IMR-90 (cell line): ENCODE measurements at regions of chr16 and their contacts with region 1.

Region 1: DNA sequence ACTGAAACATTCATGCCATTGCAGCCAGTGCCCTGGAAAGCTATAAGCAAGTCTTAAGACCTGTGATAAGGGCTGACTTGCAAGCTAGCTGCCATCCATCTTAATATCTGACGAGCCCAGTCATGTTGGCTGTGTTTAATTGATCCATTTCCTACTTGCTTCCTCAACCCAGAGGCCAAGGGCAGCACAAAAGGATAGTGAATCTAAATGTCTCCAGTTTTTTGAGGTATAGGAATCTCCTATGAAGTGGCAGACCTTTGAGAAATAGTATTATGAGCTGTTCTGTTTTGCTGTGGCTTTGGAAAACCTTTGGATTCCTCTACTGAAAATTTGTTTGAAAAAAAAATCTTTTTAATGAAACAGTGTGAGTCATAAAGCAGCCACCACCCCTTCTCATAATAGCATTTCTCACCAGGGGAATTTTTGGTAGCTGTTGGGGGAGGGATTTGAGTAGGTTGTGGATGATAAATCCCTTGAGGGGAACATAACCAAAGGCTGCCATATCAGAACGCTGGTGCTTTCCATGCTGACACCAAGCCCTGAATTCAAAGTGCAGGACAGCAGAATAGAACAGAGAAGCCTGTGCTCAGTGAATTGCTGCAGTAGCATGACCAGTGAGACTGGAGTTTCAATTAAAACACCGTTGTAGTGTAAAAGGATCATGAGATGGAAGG is 12.9 kb downstream of the ZNRF1 start:
- DNase-seq: peak; percentile 92
- ATAC-seq: peak; percentile 95
- H3K4me3 ChIP-seq: no peak overlapping the region; the same call in 1 of the 2 replicates
- H3K27ac ChIP-seq: peak overlapping the region; percentile 32
- H3K4me1 ChIP-seq: peaks cover 12% of the 10 kb centered on the region
- H3K27me3 ChIP-seq: no peaks in the 10 kb centered on the region
- CTCF ChIP-seq: no peak
- POLR2A ChIP-seq: no peak
- RAD21 ChIP-seq: 0 out of 2 replicates have a peak, but pooled peaks have one; percentile 8

Region 2: GRCh38 chr16:75087375-75087979 is 75.7 kb after region 1 on chr16:
- CTCF ChIA-PET with region 1: no interaction called
- POLR2A ChIA-PET with region 1: no interaction called
- dilution Hi-C with region 1: no loop called
- in situ Hi-C with region 1: loop called (anchors 5 kb)
- intact Hi-C with region 1: loop called (anchors 5 kb)
- DNase-seq: peak; percentile 93
- ATAC-seq: peak; percentile 89
- H3K4me3 ChIP-seq: peak overlapping the region; percentile 21
- H3K27ac ChIP-seq: peak overlapping the region; percentile 91
- H3K4me1 ChIP-seq: peaks cover 22% of the 10 kb centered on the region
- H3K27me3 ChIP-seq: no peaks in the 10 kb centered on the region
- CTCF ChIP-seq: no peak
- POLR2A ChIP-seq: no peak
- RAD21 ChIP-seq: no peak